H1 (cell line): ENCODE measurements at regions of chr12 and their contacts with region 1.

Region 1: DNA sequence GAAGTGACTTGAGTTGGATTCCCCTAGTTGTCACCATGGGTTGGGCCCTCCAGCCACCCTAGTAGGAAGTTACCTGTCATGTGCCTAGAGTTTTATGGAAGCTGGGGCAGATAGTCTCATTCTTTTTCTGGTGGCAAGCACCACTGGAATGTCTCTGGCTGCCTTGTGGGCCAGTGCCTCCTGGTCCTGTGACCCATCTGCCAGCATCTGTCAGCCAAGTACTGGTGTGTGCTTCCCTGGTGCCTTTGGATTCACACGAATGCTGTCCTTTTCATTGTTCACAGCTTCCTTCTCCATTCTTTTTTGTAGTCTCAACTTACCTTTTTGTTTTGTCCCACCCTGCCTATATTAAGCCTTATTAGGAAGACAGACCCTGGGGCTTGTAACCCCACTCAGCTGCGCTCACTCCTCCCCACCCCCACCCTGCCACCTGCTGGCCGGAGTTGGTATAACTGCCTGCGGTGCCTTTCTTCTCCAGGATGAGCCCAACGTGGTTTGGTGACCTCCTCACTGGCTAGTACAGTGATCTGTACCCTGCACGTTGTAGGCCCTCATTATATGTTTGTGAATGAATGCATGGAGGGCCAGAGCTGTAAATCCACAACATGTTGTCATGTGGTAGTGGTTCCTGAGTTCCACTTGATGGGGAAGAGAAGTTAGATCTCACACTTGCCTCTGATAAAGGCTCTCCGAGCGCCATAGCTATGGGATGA is 125.7 kb downstream of the TSPAN9 start:
- DNase-seq: peak in 1 of 2 experiments; percentile 93
- H3K4me3 ChIP-seq: no peak overlapping the region
- H3K27ac ChIP-seq: no peak overlapping the region
- H3K4me1 ChIP-seq: peaks cover 3 to 16% (median 10%) of the 10 kb centered on the region in 4 experiments
- H3K27me3 ChIP-seq: peaks cover 10 to 43% (median 32%) of the 10 kb centered on the region in 4 experiments
- CTCF ChIP-seq: peak; percentile 92 to 94 (median 93)
- EP300 ChIP-seq: no peak
- POLR2A ChIP-seq: no peak
- RAD21 ChIP-seq: peak; percentile 65 to 77

Region 2: GRCh38 chr12:3150931-3151835 is 51.7 kb before region 1 on chr12:
- CTCF ChIA-PET with region 1: interaction called, 300 read pairs
- POLR2A ChIA-PET with region 1: interaction called, 5 read pairs
- DNase-seq: no peak
- H3K4me3 ChIP-seq: no peak overlapping the region
- H3K27ac ChIP-seq: no peak overlapping the region
- H3K4me1 ChIP-seq: peaks cover 8 to 31% (median 27%) of the 10 kb centered on the region in 4 experiments
- H3K27me3 ChIP-seq: no peaks in the 10 kb centered on the region; a peak in 1 of 7 replicates
- CTCF ChIP-seq: no peak
- EP300 ChIP-seq: no peak
- POLR2A ChIP-seq: no peak
- RAD21 ChIP-seq: no peak; a peak in 1 of 4 replicates

Region 3: GRCh38 chr12:3186546-3187215 is 16.2 kb before region 1 on chr12:
- CTCF ChIA-PET with region 1: interaction called, 83 read pairs
- POLR2A ChIA-PET with region 1: interaction called, 8 read pairs
- DNase-seq: no peak
- H3K4me3 ChIP-seq: no peak overlapping the region
- H3K27ac ChIP-seq: no peak overlapping the region
- H3K4me1 ChIP-seq: peaks cover 0 to 5% (median 0%) of the 10 kb centered on the region in 4 experiments; a peak in 2 of 7 replicates
- H3K27me3 ChIP-seq: no peaks in the 10 kb centered on the region
- CTCF ChIP-seq: no peak
- EP300 ChIP-seq: no peak
- POLR2A ChIP-seq: no peak
- RAD21 ChIP-seq: no peak

Region 4: GRCh38 chr12:3231399-3231876 is 28.5 kb after region 1 on chr12:
- CTCF ChIA-PET with region 1: interaction called, 26 read pairs
- POLR2A ChIA-PET with region 1: interaction called, 4 read pairs
- DNase-seq: peak in 1 of 2 experiments; percentile 81
- H3K4me3 ChIP-seq: peak overlapping the region in 1 of 4 experiments; percentile 31; a peak in 2 of 8 replicates
- H3K27ac ChIP-seq: no peak overlapping the region
- H3K4me1 ChIP-seq: peaks cover 0 to 31% (median 17%) of the 10 kb centered on the region in 4 experiments; a peak in 6 of 7 replicates
- H3K27me3 ChIP-seq: no peaks in the 10 kb centered on the region; a peak in 1 of 7 replicates
- CTCF ChIP-seq: no peak
- EP300 ChIP-seq: no peak
- POLR2A ChIP-seq: no peak
- RAD21 ChIP-seq: no peak

Region 5: DNA sequence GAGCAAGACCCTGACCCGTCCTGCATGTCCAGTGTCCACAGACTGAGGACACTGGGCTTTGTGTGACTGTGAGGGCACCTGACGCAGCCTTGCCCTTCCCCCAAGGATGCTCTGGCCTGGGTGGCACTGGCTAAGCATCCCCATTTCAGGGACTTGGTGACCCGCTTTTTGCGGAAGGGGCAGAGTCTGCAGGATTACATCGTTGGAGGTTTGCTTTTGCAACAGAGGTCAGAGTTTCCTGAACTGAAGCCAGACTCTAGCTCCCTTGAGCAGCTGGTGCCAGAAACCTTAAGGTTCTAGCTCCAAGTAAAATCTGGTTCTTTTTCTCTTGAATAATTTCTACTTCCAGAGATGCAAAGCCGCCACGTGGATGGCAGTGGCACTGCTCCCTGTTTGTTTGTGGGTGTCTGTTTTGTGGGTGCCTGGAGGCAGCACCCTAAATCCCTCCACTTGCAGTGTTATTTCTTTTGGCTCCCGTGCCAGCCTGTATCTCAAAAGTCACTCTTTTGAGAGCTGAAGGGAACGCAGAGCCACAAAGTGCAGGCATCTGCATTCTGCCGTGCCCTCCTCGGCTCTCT is 59.0 kb after region 1 on chr12:
- CTCF ChIA-PET with region 1: interaction called, 41 read pairs
- POLR2A ChIA-PET with region 1: no interaction called
- DNase-seq: no peak
- H3K4me3 ChIP-seq: no peak overlapping the region
- H3K27ac ChIP-seq: no peak overlapping the region
- H3K4me1 ChIP-seq: no peaks in the 10 kb centered on the region
- H3K27me3 ChIP-seq: no peaks in the 10 kb centered on the region
- CTCF ChIP-seq: no peak
- EP300 ChIP-seq: no peak
- POLR2A ChIP-seq: no peak
- RAD21 ChIP-seq: no peak

Region 6: GRCh38 chr12:3313675-3314663 is 111.1 kb after region 1 on chr12:
- CTCF ChIA-PET with region 1: interaction called, 10 read pairs
- POLR2A ChIA-PET with region 1: no interaction called
- DNase-seq: no peak
- H3K4me3 ChIP-seq: no peak overlapping the region
- H3K27ac ChIP-seq: no peak overlapping the region
- H3K4me1 ChIP-seq: peaks cover 0 to 3% (median 0%) of the 10 kb centered on the region in 4 experiments; a peak in 2 of 7 replicates
- H3K27me3 ChIP-seq: no peaks in the 10 kb centered on the region; a peak in 2 of 7 replicates
- CTCF ChIP-seq: peak in 2 of 3 experiments; percentile 84 to 86; a peak in 3 of 4 replicates
- EP300 ChIP-seq: no peak
- POLR2A ChIP-seq: no peak
- RAD21 ChIP-seq: peak; percentile 76 to 82